ENCODE measurements at regions of chr9 and their contacts with region 1.

Region 1: DNA sequence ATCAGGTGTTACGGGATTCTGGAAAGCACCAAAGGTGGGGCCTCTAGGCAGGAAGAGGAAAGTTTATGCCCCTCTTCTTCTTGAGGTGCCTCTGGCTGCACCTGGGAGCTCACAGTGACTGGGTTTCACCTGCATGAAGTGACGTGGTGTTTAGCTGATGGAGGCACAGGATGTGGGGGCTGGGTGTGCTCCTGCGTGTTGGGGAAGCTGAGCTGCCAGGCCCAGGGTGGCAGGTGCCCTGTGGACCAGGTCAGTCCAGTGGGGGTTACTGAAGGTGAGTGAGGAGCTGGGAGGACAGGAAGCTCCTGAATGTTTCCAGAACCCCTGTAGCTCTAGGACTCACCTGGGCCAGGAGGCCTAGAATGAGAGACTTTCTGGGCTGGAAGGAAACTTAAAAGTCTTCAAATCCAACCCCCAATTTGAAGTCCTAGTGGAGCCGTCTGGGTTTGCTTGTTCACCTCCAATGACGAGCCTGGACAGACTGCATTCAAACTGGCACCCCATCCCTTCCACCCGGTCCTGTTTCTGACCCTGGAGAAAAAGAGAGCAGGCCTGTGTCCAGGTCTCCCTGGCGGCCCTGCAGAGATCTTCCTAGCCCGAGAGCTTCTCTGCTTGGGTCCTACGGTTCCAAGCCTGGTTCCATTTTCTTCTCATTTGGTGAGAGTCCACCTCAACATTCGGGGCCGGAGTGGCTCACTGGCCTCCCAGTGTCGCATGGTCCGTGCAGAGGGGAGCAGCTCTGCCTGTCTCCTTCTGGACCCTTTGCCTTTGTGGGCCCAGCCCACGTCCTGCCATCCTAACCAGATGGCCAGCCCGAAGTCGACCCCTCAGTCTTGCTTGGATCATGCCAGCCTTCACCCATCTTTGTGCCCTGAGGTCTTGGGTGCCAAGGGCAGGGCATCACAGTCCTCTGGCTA is 22.3 kb downstream of the TRAF1 start:
- DNase-seq: peak in 8 of 9 donors; percentile 41 to 89 (median 86)
- ATAC-seq: peak; percentile 95
- H3K4me3 ChIP-seq: no peak overlapping the region
- H3K4me3 Mint-ChIP-seq: peak overlapping the region; percentile 38 to 72 (median 56)
- H3K27ac ChIP-seq: peak overlapping the region; percentile 95
- H3K27ac Mint-ChIP-seq: peak overlapping the region; percentile 90 to 100 (median 96)
- H3K4me1 ChIP-seq: peaks cover 64 to 79% of the 10 kb centered on the region in 2 donors
- H3K4me1 Mint-ChIP-seq: peaks cover 48 to 91% (median 86%) of the 10 kb centered on the region in 7 donors
- H3K27me3 ChIP-seq: no peaks in the 10 kb centered on the region
- H3K27me3 Mint-ChIP-seq: no peaks in the 10 kb centered on the region

Region 2: GRCh38 chr9:120916588-120916987 is 12.3 kb after region 1 on chr9:
- CTCF ChIA-PET with region 1: interaction called, 11 read pairs
- POLR2A ChIA-PET with region 1: interaction called, 2,417 read pairs
- intact Hi-C with region 1: loop called in 1 of 2 experiments (anchors 1 kb)
- DNase-seq: no peak
- ATAC-seq: no peak
- H3K4me3 ChIP-seq: no peak overlapping the region
- H3K4me3 Mint-ChIP-seq: peak overlapping the region; percentile 60 to 79 (median 74)
- H3K27ac ChIP-seq: peak overlapping the region; percentile 59
- H3K27ac Mint-ChIP-seq: peak overlapping the region; percentile 82 to 95 (median 92)
- H3K4me1 ChIP-seq: peaks cover 72% of the 10 kb centered on the region in 2 donors
- H3K4me1 Mint-ChIP-seq: peaks cover 60 to 92% (median 81%) of the 10 kb centered on the region in 7 donors
- H3K27me3 ChIP-seq: no peaks in the 10 kb centered on the region
- H3K27me3 Mint-ChIP-seq: no peaks in the 10 kb centered on the region

Region 3: DNA sequence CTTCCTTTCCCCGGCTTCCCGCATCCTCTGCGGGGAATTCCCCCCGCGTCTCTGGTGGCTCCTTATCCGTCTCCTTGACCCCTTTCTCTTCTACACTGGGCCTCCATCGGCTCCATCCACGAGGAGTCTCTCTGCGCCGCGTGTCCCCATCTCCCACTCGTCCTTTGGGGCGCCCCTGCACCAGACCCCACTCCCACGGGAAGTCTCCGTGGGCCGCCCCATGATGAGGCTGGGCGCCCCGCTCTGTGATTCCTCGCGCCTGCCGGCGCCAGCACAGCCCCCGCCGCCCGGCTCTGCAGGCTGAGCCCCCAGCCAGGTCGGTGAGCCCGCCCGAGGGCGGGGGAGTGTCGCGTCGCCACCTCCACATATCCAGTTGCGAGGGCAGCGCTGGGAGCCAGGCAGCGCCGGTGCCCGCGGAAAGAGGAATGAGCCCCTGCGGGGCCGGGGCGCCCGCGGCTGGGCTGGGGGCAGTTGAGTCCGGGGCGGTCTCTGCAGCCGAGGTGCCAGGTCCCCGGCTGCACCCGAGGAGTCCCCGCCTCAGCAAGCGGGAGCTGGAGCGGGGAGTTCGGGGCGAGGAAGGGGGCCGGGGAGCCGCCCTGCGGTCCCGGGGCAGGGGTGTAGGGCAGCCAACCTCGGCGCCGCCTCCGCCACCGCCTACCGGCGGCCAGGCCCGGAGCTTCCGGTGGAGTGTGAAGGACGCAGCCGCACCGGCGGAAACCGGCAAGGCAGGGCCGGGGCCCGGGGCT is 24.3 kb after region 1 on chr9:
- CTCF ChIA-PET with region 1: interaction called, 17 read pairs
- POLR2A ChIA-PET with region 1: interaction called, 2,417 read pairs
- intact Hi-C with region 1: loop called (anchors 1 to 2 kb)
- DNase-seq: peak; percentile 63 to 86 (median 74)
- ATAC-seq: peak; percentile 58
- H3K4me3 ChIP-seq: peak overlapping the region; percentile 79
- H3K4me3 Mint-ChIP-seq: peak overlapping the region; percentile 90 to 100 (median 96)
- H3K27ac ChIP-seq: peak overlapping the region; percentile 97
- H3K27ac Mint-ChIP-seq: peak overlapping the region; percentile 95 to 100 (median 99)
- H3K4me1 ChIP-seq: peaks cover 62 to 84% of the 10 kb centered on the region in 2 donors
- H3K4me1 Mint-ChIP-seq: peaks cover 57 to 95% (median 86%) of the 10 kb centered on the region in 7 donors
- H3K27me3 ChIP-seq: no peaks in the 10 kb centered on the region
- H3K27me3 Mint-ChIP-seq: no peaks in the 10 kb centered on the region

Region 4: GRCh38 chr9:120936011-120936763 is 31.9 kb after region 1 on chr9:
- CTCF ChIA-PET with region 1: interaction called, 17 read pairs
- POLR2A ChIA-PET with region 1: interaction called, 2,417 read pairs
- intact Hi-C with region 1: loop called in 1 of 2 experiments (anchors 1 kb)
- DNase-seq: peak; percentile 71 to 89 (median 82)
- ATAC-seq: peak; percentile 85
- H3K4me3 ChIP-seq: peak overlapping the region; percentile 21
- H3K4me3 Mint-ChIP-seq: peak overlapping the region; percentile 33 to 77 (median 62)
- H3K27ac ChIP-seq: peak overlapping the region; percentile 97
- H3K27ac Mint-ChIP-seq: peak overlapping the region; percentile 88 to 100 (median 98)
- H3K4me1 ChIP-seq: peaks cover 61% of the 10 kb centered on the region in 2 donors
- H3K4me1 Mint-ChIP-seq: peaks cover 31 to 71% (median 63%) of the 10 kb centered on the region in 7 donors
- H3K27me3 ChIP-seq: no peaks in the 10 kb centered on the region
- H3K27me3 Mint-ChIP-seq: peaks cover 0 to 2% (median 0%) of the 10 kb centered on the region in 5 donors

Measured in naive thymus-derived CD4-positive, alpha-beta T cell (primary cell).